Activated T-helper 1 cell treated with anti-CD3 and anti-CD28 coated beads, Interleukin-12 subunit alpha, Interleukin-12 subunit beta, Interleukin-2, Interleukin-4 antibody, amounts not matched to agents 30 ng/mL and 10 ng/mL and 1 ng/mL, durations not matched to agents 14 hours and 24 hours and 36 hours (primary cell): ENCODE measurements at regions of chr2 and their contacts with region 1.

Region 1: GRCh38 chr2:216222650-216223352 is 113.7 kb downstream of the XRCC5 start:
- DNase-seq: peak; percentile 14
- H3K4me3 Mint-ChIP-seq: peak overlapping the region; percentile 3
- H3K27ac Mint-ChIP-seq: peak overlapping the region; percentile 75
- H3K4me1 Mint-ChIP-seq: peaks cover 56% of the 10 kb centered on the region
- H3K27me3 Mint-ChIP-seq: no peaks in the 10 kb centered on the region

Region 2: DNA sequence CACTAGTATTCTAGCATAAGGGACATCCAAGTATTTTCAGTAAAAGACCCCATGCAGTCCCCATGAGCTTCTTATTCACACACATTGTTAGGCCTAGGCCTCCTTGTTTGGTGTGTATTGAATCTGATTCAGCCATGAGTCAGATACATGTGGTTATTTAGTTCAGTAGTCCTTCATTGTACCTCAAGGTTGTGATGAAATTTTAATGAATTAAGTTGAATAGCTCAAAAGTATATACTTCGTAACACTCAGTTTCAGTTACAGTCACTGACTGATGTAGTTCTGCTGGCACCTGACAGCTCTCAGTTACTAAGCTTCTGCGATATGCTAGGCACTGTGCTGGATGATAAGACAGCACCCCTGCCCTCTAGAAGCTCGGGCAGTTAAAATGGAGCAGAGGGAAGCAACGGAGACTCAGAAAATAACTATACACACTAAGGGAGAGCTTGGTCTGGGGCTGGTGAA is 27.2 kb before region 1 on chr2:
- intact Hi-C with region 1: loop called (anchors 2 kb)
- DNase-seq: no peak
- H3K4me3 Mint-ChIP-seq: no peak overlapping the region
- H3K27ac Mint-ChIP-seq: peak overlapping the region; percentile 78
- H3K4me1 Mint-ChIP-seq: peaks cover 65% of the 10 kb centered on the region
- H3K27me3 Mint-ChIP-seq: no peaks in the 10 kb centered on the region

Region 3: DNA sequence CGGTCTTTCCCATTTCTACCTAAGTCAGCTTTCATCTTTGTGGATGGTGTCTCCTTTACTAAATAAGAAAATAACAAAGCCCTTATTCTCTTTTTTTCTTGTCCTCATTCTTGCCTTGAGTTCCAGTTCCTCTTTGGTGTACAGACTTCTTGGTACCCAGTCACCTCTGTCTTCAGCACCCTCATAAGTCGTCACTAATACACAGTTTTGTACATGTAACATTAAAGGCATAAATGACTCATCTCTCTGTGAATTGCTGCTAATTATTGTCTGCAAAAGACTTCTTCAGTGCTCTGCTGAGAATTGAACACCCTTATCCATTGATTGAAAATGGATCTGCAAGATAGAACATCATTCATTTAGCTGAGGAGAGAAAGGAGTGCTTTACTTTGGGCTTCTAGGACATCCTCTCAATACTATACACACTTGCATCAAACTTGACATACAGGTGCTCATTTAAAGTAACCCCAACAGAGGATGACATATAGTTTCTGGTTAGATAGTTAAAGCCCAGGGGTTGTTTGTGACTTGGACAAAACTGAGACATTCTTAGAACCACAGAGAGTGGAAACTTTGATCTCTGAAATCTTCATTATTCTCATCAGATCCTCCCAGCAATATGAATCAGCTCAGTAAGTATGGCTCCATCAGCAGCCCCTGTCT is 16.6 kb before region 1 on chr2:
- intact Hi-C with region 1: loop called (anchors 2 kb)
- DNase-seq: no peak
- H3K4me3 Mint-ChIP-seq: no peak overlapping the region
- H3K27ac Mint-ChIP-seq: peak overlapping the region; percentile 87
- H3K4me1 Mint-ChIP-seq: peaks cover 79% of the 10 kb centered on the region
- H3K27me3 Mint-ChIP-seq: no peaks in the 10 kb centered on the region

Region 4: DNA sequence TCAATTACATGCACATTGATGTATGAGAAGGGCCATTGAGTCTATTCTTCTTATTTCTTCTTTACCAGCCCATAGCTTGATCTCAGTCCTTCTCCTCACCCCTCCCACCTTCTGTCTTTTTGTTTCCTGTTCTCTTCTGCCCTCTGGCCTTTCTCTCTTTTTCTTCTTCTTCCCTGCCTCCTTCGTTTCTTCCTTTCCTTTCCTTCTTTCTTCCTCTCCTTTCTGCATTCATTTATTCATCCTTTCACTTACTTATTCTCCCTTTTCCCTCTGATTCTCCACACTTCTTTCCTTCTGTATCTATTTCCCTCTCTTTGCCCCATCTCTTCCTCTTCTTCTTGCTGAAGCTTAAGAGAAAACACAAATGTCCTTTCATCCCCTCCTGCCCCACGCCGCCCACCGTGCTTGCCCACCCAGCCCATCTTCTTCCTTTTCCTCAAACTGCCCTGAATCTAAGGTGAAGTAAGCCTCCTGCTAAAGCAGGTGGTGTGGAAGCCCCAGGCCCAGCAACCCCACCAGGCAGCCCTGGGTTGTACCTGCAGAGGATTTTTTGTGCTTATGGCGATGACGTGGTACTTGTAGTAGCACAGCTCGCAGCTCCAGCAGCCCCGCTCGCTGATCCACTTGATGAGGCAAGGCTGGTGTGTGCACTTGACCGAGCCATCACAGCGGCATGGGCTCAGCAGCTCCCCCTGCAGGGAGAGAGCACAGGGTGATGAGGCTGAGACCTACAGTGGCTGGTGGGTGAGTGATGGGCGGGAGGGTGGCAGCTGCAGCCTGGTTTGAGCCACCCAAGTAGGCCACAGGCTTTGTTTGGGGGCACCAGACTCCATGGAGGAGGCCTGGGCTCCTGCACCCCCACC is 60.5 kb after region 1 on chr2:
- intact Hi-C with region 1: loop called (anchors 2 kb)
- DNase-seq: no peak
- H3K4me3 Mint-ChIP-seq: no peak overlapping the region
- H3K27ac Mint-ChIP-seq: no peak overlapping the region
- H3K4me1 Mint-ChIP-seq: no peaks in the 10 kb centered on the region
- H3K27me3 Mint-ChIP-seq: no peaks in the 10 kb centered on the region

Region 5: GRCh38 chr2:216348756-216349308 is 126.0 kb after region 1 on chr2:
- intact Hi-C with region 1: loop called (anchors 5 kb)
- DNase-seq: no peak
- H3K4me3 Mint-ChIP-seq: no peak overlapping the region
- H3K27ac Mint-ChIP-seq: no peak overlapping the region
- H3K4me1 Mint-ChIP-seq: peaks cover 61% of the 10 kb centered on the region
- H3K27me3 Mint-ChIP-seq: peaks cover 2% of the 10 kb centered on the region

Region 6: GRCh38 chr2:216478151-216478550 is 255.3 kb after region 1 on chr2:
- intact Hi-C with region 1: loop called (anchors 5 kb)
- DNase-seq: no peak
- H3K4me3 Mint-ChIP-seq: no peak overlapping the region
- H3K27ac Mint-ChIP-seq: no peak overlapping the region
- H3K4me1 Mint-ChIP-seq: peaks cover 24% of the 10 kb centered on the region
- H3K27me3 Mint-ChIP-seq: no peaks in the 10 kb centered on the region

Region 7: GRCh38 chr2:216498418-216499413 is 275.9 kb after region 1 on chr2 and contains the start of gene RPL37A:
- intact Hi-C with region 1: loop called (anchors 2 kb)
- DNase-seq: peak; percentile 87
- H3K4me3 Mint-ChIP-seq: peak within 1 kb of the TSS; percentile 93
- H3K27ac Mint-ChIP-seq: peak within 1 kb of the TSS; percentile 86
- H3K4me1 Mint-ChIP-seq: peaks cover 57% of the 10 kb centered on the region
- H3K27me3 Mint-ChIP-seq: no peaks in the 10 kb centered on the region
- total RNA-seq, gene RPL37A: 2,803 and 2,922 TPM in 2 replicates